Activated CD4-positive, alpha-beta memory T cell treated with anti-CD3 and anti-CD28 coated beads for 36 hours (primary cell): ENCODE measurements at regions of chr9 and their contacts with region 1.

Region 1: DNA sequence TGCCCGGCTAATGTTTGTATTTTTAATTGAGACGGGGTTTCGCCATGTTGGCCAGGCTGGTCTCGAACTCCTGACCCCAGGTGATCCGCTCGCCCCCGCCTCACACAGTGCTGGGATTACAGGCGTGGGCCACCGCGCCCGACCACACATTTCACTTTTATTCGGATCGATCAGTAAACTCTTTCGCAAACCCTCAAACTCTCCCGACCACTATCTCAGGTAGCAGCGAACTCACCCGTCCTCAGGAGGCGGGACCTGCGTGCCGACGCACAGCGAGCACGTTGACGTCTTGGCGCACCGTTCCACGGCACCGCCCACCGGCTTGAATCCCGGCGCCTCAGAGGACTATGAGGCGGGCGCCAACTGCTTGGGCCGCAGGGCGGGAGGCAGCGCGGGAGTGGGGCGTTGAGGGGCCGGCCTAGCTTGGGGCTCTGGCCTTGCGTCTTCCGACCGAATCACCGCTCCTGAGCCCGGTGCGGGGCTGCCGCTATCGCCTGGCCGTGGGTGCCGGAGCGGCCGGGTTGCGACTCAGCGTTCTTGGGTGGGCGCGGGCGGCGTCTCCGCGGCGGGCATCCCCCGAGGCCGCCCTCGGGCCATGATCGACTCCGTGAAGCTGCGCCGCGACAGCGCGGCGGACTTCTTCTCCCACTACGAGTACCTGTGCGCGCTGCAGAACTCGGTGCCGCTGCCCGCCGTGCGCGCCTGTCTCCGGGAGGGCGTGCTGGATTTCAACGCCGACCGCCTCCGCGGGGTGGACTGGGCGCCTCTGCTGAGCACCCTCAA is at the start of gene CEP78:
- DNase-seq: peak; percentile 93
- H3K4me3 Mint-ChIP-seq: peak within 1 kb of the TSS; percentile 94
- H3K27ac Mint-ChIP-seq: peak within 1 kb of the TSS; percentile 91
- H3K4me1 Mint-ChIP-seq: peaks cover 31% of the 10 kb centered on the region
- H3K27me3 Mint-ChIP-seq: no peaks in the 10 kb centered on the region
- total RNA-seq, gene CEP78: 40.1 to 42.2 TPM

Region 2: DNA sequence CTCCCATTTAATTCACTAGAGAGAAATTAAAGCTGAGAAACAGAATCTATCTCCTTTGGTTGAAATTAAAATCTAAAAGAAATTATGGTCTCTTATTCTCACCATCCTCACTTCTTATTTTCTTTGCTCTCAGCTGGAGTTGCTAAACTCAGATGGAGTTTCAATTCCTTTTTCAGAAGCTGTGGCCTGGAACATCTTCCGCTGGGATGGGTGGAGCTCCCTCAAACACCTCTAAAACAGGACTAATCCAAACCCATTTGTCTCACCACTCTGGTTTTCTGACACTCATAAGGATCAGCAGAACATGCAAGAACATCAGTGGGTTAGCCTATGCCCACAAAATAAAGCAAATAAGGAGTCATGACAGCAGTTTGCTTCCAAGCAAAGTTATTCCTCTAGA is 39.7 kb before region 1 on chr9:
- CTCF ChIA-PET with region 1: no interaction called
- POLR2A ChIA-PET with region 1: no interaction called
- intact Hi-C with region 1: loop called (anchors 2 kb)
- DNase-seq: no peak
- H3K4me3 Mint-ChIP-seq: no peak overlapping the region
- H3K27ac Mint-ChIP-seq: no peak overlapping the region
- H3K4me1 Mint-ChIP-seq: peaks cover 11% of the 10 kb centered on the region
- H3K27me3 Mint-ChIP-seq: no peaks in the 10 kb centered on the region

Region 3: GRCh38 chr9:78314953-78315870 is 79.3 kb after region 1 on chr9:
- CTCF ChIA-PET with region 1: no interaction called
- POLR2A ChIA-PET with region 1: no interaction called
- intact Hi-C with region 1: no loop called
- DNase-seq: no peak
- H3K4me3 Mint-ChIP-seq: no peak overlapping the region
- H3K27ac Mint-ChIP-seq: no peak overlapping the region
- H3K4me1 Mint-ChIP-seq: no peaks in the 10 kb centered on the region
- H3K27me3 Mint-ChIP-seq: no peaks in the 10 kb centered on the region